Thyroid gland (tissue), 4 donors: ENCODE measurements at regions of chr20 and their contacts with region 1.

Region 1: GRCh38 chr20:40990542-40991120 is 38.0 kb upstream of the TOP1 start:
- DNase-seq: peak; percentile 84 to 86
- H3K4me3 ChIP-seq: no peak overlapping the region
- H3K27ac ChIP-seq: no peak overlapping the region
- H3K4me1 ChIP-seq: peaks cover 0 to 8% of the 10 kb centered on the region in 2 donors
- H3K27me3 ChIP-seq: no peaks in the 10 kb centered on the region
- CTCF ChIP-seq: peak; percentile 38 to 89 (median 76)
- POLR2A ChIP-seq: no peak

Region 2: GRCh38 chr20:41095110-41095969 is 104.7 kb after region 1 on chr20:
- intact Hi-C with region 1: loop called (anchors 2 kb)
- DNase-seq: peak; percentile 57 to 65
- H3K4me3 ChIP-seq: no peak overlapping the region
- H3K27ac ChIP-seq: no peak overlapping the region
- H3K4me1 ChIP-seq: no peaks in the 10 kb centered on the region
- H3K27me3 ChIP-seq: no peaks in the 10 kb centered on the region
- CTCF ChIP-seq: peak; percentile 48 to 82 (median 76)
- POLR2A ChIP-seq: no peak